ENCODE measurements at regions of chr14 and their contacts with region 1.

Region 1: DNA sequence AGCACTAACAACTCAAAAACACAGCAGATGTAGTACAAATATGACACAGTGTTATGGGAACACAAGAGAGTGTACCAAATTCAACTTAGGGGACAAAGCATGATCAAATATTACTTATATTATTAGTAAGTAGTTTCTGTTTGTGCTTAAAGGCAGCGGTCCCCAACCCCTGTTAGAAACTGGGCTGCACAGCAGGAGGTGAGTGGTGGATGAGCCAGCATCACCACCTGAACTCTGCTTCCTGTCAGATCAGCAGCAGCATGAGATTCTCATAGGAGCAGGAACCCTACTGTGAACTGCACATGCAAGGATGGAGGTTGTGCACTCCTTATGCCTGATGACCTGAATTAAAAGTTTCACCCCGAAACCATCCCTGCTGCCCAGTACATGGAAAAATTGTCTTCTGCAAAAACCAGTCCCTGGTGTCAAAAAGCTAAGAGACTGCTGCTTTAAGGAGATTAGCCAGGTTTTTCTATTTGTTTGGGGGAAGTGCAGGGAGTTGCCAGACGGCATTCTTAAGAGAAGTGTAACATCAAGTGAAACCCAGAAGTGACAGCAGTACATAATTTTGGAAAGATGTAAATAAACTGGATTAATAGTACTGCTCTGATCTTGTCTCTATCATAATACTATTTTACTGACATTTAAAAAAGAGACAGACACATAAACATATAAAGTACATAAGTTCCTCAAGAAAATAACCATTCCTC is 26.7 kb downstream of the GTF2A1 start:
- DNase-seq: no peak
- ATAC-seq: no peak
- H3K4me3 Mint-ChIP-seq: no peak overlapping the region
- H3K27ac Mint-ChIP-seq: peak overlapping the region; percentile 35
- H3K4me1 Mint-ChIP-seq: no peaks in the 10 kb centered on the region
- H3K27me3 Mint-ChIP-seq: no peaks in the 10 kb centered on the region
- CTCF ChIP-seq: no peak

Region 2: GRCh38 chr14:81122326-81122725 is 71.8 kb before region 1 on chr14:
- CTCF ChIA-PET with region 1: no interaction called
- POLR2A ChIA-PET with region 1: no interaction called
- intact Hi-C with region 1: no loop called
- DNase-seq: no peak
- ATAC-seq: peak; percentile 34
- H3K4me3 Mint-ChIP-seq: no peak overlapping the region
- H3K27ac Mint-ChIP-seq: no peak overlapping the region
- H3K4me1 Mint-ChIP-seq: peaks cover 36% of the 10 kb centered on the region
- H3K27me3 Mint-ChIP-seq: no peaks in the 10 kb centered on the region
- CTCF ChIP-seq: no peak

Region 3: DNA sequence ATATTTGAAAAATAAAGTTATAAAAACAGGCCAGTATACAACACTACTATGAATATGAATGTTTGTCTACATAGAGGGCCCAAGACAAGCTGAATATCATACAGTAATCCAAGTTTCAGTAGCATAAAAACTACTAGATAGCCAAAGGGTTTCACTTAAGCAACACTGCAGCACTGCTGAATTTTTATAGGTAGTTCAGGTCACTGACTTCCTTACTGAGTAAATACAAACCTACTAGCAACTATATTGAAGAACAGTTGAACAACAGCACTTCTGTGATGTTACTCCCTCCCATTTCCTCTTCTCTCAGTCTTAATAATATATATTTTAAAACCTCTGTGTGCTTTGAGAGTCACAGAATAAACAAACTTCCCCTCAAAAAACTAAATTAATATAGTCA is 16.0 kb before region 1 on chr14:
- CTCF ChIA-PET with region 1: no interaction called
- POLR2A ChIA-PET with region 1: no interaction called
- intact Hi-C with region 1: loop called (anchors 2 kb)
- DNase-seq: no peak
- ATAC-seq: no peak
- H3K4me3 Mint-ChIP-seq: no peak overlapping the region
- H3K27ac Mint-ChIP-seq: peak overlapping the region; percentile 41
- H3K4me1 Mint-ChIP-seq: peaks cover 59% of the 10 kb centered on the region
- H3K27me3 Mint-ChIP-seq: no peaks in the 10 kb centered on the region
- CTCF ChIP-seq: no peak

Measured in activated B cell treated with CpG ODN at 0.5 μM for 24 hours (primary cell).